Ovary (tissue), 10 donors: ENCODE measurements at regions of chr6 and their contacts with region 1.

Region 1: GRCh38 chr6:153208706-153209105 is 77.6 kb upstream of the RGS17 start:
- DNase-seq: no peak
- H3K4me3 ChIP-seq: no peak overlapping the region
- H3K27ac ChIP-seq: no peak overlapping the region
- H3K4me1 ChIP-seq: no peaks in the 10 kb centered on the region
- H3K27me3 ChIP-seq: no peaks in the 10 kb centered on the region
- CTCF ChIP-seq: no peak
- EP300 ChIP-seq: no peak
- POLR2A ChIP-seq: no peak

Region 2: DNA sequence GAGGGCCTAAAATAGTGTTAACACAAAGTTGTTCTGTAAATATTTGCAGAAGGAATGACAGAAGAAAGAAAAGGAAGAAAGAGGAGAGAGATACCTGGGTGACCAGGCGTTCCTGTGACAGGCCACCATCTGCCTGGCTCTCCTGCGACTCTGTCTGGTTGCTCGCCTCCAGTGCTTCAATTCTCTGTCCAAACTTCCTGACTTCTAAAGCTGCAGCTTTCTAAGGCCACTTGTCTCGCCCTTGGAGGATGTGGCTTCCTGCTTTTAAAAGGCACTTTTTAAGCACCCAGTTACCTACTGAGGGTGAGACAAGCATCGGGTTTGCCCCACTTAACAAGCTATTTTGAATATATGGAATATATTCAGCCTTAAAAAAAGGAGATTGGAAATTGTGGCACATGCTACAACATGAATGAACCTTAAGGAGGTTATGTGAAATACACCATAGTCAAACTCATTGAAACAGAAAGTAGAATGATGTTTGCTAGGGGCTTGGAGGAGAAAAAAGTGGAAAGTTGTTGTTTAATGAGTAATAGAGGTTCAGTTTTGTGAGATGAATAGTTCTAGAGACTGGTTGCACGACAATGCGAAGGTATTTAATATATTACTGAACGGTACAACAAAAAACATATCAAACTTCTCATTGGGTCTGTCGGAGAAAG is 425.4 kb before region 1 on chr6:
- intact Hi-C with region 1: loop called in 1 of 4 experiments (anchors 10 kb)
- DNase-seq: no peak
- H3K4me3 ChIP-seq: no peak overlapping the region
- H3K27ac ChIP-seq: no peak overlapping the region
- H3K4me1 ChIP-seq: no peaks in the 10 kb centered on the region
- H3K27me3 ChIP-seq: no peaks in the 10 kb centered on the region
- CTCF ChIP-seq: no peak
- EP300 ChIP-seq: no peak
- POLR2A ChIP-seq: no peak

Region 3: GRCh38 chr6:152893187-152893586 is 315.5 kb before region 1 on chr6:
- intact Hi-C with region 1: no loop called
- DNase-seq: no peak
- H3K4me3 ChIP-seq: no peak overlapping the region
- H3K27ac ChIP-seq: no peak overlapping the region
- H3K4me1 ChIP-seq: no peaks in the 10 kb centered on the region
- H3K27me3 ChIP-seq: no peaks in the 10 kb centered on the region
- CTCF ChIP-seq: no peak
- EP300 ChIP-seq: no peak
- POLR2A ChIP-seq: no peak

Region 4: GRCh38 chr6:153301602-153302001 is 92.9 kb after region 1 on chr6:
- intact Hi-C with region 1: no loop called
- DNase-seq: no peak
- H3K4me3 ChIP-seq: no peak overlapping the region
- H3K27ac ChIP-seq: no peak overlapping the region
- H3K4me1 ChIP-seq: no peaks in the 10 kb centered on the region
- H3K27me3 ChIP-seq: no peaks in the 10 kb centered on the region
- CTCF ChIP-seq: no peak
- EP300 ChIP-seq: no peak
- POLR2A ChIP-seq: no peak